ENCODE measurements at regions of chr1 and their contacts with region 1.

Region 1: DNA sequence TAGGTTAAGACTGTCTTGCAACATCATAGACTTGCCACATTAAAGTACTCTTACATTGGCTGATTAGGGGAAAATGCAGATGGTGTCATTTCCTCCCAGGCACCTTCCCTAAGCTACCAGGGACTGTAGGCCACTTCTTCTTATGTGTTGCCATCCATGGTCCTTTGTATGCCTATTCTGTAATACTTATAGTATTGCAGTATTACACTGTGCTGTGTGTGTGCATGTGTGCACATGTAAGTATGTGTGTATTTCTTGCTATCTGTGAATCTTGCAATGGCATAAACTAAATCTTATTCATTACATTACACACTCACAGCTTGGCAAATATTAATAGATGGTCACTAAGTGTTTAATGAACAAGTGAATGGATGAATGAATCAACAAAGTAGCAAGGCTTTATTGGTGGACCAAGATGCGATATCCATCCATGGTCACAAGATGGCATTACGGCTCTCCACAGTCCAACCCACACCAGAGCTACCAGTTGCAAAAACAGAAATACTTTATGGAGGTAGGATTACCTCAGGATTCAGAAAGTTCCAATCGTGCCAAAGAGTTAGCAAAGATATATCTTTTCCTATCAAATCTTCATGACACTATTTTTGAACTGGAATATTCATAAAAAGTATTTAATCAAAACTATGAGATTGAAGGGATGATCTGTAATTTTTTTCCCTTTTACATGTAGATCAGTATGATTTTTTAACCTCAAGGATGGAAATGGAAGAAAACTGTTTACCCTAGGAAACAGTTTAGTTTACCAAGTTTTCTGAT is 160.2 kb downstream of the DENND1B start:
- DNase-seq: peak; percentile 1
- H3K4me3 ChIP-seq: no peak overlapping the region
- H3K27me3 ChIP-seq: no peaks in the 10 kb centered on the region
- CTCF ChIP-seq: peak; percentile 75

Region 2: GRCh38 chr1:197725044-197725443 is 109.9 kb after region 1 on chr1:
- CTCF ChIA-PET with region 1: no interaction called
- POLR2A ChIA-PET with region 1: no interaction called
- DNase-seq: no peak
- H3K4me3 ChIP-seq: no peak overlapping the region
- H3K27me3 ChIP-seq: no peaks in the 10 kb centered on the region
- CTCF ChIP-seq: no peak

Region 3: DNA sequence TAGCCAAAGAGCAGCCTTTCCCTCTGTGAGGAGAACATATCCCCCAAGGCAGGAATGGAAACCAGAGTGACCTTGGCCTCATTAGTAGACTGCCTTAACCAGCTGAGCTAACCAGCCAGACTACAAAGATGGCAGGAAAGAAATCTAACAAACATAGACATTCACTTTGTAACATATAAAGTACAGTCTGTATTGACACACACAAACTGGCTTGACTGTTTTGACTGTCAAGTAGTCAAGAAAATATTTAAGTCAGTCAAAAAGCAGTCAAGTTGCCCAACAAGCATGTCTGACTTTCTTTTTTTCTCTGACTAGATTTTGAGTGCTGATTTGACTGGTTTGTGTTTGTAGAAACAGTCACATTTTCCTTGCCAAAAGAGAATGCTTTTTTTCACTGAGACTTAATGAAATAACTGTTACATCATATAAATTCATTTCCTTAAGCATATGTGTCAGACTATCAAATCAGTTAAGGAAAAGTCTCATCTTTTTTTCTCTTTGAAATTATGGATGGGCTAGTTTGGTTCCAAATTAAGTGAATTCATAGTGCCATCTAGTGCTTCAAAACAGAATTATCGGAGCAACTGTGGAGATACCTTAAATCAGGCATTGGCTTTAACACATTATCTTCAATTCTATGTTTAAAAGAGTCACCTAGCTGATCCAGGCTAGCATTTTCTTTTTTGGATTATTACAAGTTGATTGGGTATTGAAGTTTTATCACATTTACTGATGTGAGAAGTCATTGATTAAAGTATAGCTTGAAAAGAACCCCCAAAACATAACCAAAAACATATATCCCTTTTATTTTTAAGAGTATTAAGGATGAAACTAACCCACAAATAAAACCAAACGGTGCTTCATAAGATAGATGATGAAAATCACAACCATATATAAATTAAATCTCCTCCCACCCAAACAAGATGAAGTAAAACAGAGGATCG is 850.4 kb after region 1 on chr1:
- CTCF ChIA-PET with region 1: interaction called, 11 read pairs
- POLR2A ChIA-PET with region 1: no interaction called
- DNase-seq: peak; percentile 32
- H3K4me3 ChIP-seq: no peak overlapping the region
- H3K27me3 ChIP-seq: no peaks in the 10 kb centered on the region
- CTCF ChIP-seq: peak; percentile 55